ENCODE measurements at regions of chr5 and their contacts with region 1.

Region 1: GRCh38 chr5:108748401-108749127 is 867 bp downstream of the FER start:
- DNase-seq: peak; percentile 99
- ATAC-seq: peak; percentile 95
- H3K4me3 ChIP-seq: peak overlapping the region; percentile 83
- H3K27ac ChIP-seq: peak overlapping the region; percentile 91
- H3K4me1 ChIP-seq: 0 out of 2 replicates have a peak, but pooled peaks cover under 1% of the 10 kb centered on the region
- H3K27me3 ChIP-seq: no peaks in the 10 kb centered on the region
- CTCF ChIP-seq: 0 out of 2 replicates have a peak, but pooled peaks have one; percentile 10
- POLR2A ChIP-seq: peak; percentile 98
- RAD21 ChIP-seq: peak; percentile 18

Region 2: GRCh38 chr5:108521841-108522506 is 226.6 kb before region 1 on chr5:
- CTCF ChIA-PET with region 1: no interaction called
- POLR2A ChIA-PET with region 1: no interaction called
- dilution Hi-C with region 1: no loop called
- in situ Hi-C with region 1: no loop called
- intact Hi-C with region 1: loop called (anchors 1 kb)
- DNase-seq: peak; percentile 72
- ATAC-seq: peak; percentile 98
- H3K4me3 ChIP-seq: no peak overlapping the region
- H3K27ac ChIP-seq: no peak overlapping the region
- H3K4me1 ChIP-seq: peaks cover 3% of the 10 kb centered on the region
- H3K27me3 ChIP-seq: peaks cover 2% of the 10 kb centered on the region; the same call in 1 of the 2 replicates
- CTCF ChIP-seq: peak; percentile 76
- POLR2A ChIP-seq: no peak
- RAD21 ChIP-seq: peak; percentile 86

Region 3: DNA sequence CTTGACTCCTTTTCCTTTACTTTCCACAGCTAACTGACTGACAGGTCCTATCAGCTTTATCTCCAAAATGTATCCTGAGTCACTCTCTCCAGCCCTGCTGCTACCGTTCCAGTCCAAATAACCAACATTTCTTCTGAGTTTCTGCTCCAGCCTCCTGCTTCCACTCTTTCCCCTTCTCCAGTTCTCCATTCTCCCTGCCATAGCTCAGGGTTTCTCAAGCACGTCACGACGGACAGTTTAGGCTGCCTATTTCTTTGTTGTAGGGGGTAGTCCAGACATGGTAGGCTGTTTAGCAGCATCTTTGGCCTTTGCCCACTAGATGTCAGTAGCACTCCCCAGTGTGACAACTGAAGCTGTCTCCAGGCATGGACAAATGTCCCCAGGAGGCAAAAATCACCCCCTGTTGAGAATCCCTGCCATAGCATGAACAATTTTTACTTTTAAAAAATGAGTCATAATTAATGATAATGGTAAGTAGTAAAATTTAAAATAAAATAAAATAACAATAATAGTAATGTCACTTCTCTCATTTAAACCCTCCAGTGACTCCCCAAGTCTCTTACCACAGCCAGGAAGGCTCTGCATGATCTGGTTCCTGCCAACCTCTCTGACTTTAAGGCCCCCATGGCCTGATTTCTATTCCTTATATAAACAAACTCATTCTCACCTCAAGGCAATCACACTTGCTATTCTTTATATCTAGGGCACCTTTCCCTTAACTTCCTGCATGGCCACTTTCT is 106.2 kb before region 1 on chr5:
- CTCF ChIA-PET with region 1: no interaction called
- POLR2A ChIA-PET with region 1: no interaction called
- dilution Hi-C with region 1: no loop called
- in situ Hi-C with region 1: no loop called
- intact Hi-C with region 1: loop called (anchors 1 kb)
- DNase-seq: peak; percentile 69
- ATAC-seq: peak; percentile 96
- H3K4me3 ChIP-seq: no peak overlapping the region
- H3K27ac ChIP-seq: no peak overlapping the region
- H3K4me1 ChIP-seq: peaks cover 2% of the 10 kb centered on the region; the same call in 1 of the 2 replicates
- H3K27me3 ChIP-seq: no peaks in the 10 kb centered on the region
- CTCF ChIP-seq: peak; percentile 88
- POLR2A ChIP-seq: no peak
- RAD21 ChIP-seq: peak; percentile 89

Region 4: GRCh38 chr5:108801776-108802175 is 53.2 kb after region 1 on chr5:
- CTCF ChIA-PET with region 1: no interaction called
- POLR2A ChIA-PET with region 1: no interaction called
- dilution Hi-C with region 1: no loop called
- in situ Hi-C with region 1: no loop called
- intact Hi-C with region 1: loop called (anchors 5 kb)
- DNase-seq: peak; percentile 97
- ATAC-seq: peak; percentile 97
- H3K4me3 ChIP-seq: no peak overlapping the region; the same call in 1 of the 2 replicates
- H3K27ac ChIP-seq: no peak overlapping the region
- H3K4me1 ChIP-seq: peaks cover 12% of the 10 kb centered on the region
- H3K27me3 ChIP-seq: no peaks in the 10 kb centered on the region
- CTCF ChIP-seq: no peak
- POLR2A ChIP-seq: no peak
- RAD21 ChIP-seq: no peak

Region 5: DNA sequence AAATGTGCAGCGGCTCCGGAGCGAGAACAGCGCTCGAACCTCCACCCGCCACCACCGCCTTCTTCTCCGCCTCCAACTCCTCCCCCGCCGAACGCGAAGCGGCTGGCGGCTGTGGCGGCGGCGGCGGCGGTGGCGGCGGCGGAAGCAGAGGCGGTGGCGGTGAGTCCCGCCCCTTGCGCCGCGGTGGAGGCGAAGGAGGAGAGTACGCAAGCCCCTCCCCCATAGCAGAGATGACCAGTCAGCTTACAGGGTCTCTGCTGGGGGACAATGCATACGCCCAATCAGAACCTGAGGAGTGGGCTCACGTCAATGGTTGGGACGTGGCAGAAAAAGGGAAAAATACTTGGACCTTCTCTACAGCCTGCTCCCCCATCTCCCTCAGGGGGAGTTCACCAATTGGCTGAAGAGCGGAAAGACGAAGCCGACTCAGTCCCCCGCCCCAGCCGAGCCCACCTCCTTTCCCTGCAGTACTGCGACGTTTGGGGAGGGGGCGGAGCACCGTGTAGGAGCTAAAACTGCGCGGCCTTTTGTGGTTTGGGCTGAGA is 661.4 kb after region 1 on chr5 and contains the start of gene PJA2:
- CTCF ChIA-PET with region 1: no interaction called
- POLR2A ChIA-PET with region 1: no interaction called
- dilution Hi-C with region 1: no loop called
- in situ Hi-C with region 1: no loop called
- intact Hi-C with region 1: loop called (anchors 2 kb)
- DNase-seq: peak; percentile 100
- ATAC-seq: peak; percentile 92
- H3K4me3 ChIP-seq: peak within 1 kb of the TSS; percentile 97
- H3K27ac ChIP-seq: peak within 1 kb of the TSS; percentile 90
- H3K4me1 ChIP-seq: peaks cover 3% of the 10 kb centered on the region; the same call in 1 of the 2 replicates
- H3K27me3 ChIP-seq: no peaks in the 10 kb centered on the region
- CTCF ChIP-seq: peak; percentile 17; the same call in 1 of the 2 replicates
- POLR2A ChIP-seq: no peak; the same call in none of the 2 replicates
- RAD21 ChIP-seq: no peak; the same call in 1 of the 2 replicates
- total RNA-seq, gene PJA2: 70.6 and 112 TPM in 2 replicates

Measured in IMR-90 (cell line).